Common myeloid progenitor, CD34-positive (primary cell): ENCODE measurements at regions of chr3 and their contacts with region 1.

Region 1: DNA sequence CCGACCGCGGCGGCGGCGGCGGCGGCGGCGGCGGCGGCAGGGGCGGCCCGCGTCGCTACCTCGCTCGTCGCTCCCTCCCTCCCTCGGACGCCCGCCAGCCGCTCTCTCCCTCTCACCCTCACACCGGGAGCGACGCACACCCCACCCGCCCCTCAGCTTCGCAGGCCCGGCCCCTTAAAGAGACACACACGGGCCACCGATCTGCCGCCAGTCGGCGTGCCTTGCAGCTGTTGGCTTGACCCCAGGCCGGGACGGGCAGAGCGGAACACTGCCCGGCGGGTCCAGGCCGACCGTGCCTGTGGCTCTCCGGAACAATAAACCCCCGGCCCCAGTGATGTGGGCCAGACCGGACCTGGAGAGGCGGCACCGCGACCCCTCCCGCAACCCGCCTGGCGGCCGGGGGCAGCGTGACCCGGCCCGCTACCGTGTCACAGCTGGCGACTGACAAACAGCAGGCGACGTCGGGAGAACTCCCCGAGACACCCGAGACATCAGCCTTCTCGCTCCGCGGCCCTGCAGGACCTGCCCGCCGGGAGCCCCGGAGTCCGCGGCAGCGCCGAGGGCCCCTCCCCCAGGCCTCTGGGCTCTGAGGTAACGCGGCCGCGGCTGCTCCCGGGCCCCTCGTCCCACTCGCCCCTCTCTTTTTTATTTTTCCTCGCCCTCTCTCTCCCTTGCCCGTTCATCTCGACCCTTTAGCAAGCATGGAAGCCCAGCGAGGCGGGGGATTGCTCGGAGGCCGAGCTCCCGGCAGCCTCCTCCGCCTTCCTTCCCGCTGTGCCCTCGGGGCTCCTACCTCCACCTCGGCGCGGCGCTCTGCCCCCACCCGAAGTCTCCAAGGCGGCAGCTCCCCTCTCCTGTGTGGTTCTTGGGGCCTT is at the start of gene SETD2:
- DNase-seq: peak; percentile 89 to 95 (median 91)
- H3K4me3 ChIP-seq: peak within 1 kb of the TSS; percentile 89 to 99 (median 94)
- H3K27ac ChIP-seq: peak within 1 kb of the TSS; percentile 92 to 95
- H3K4me1 ChIP-seq: peaks cover 15 to 46% (median 40%) of the 10 kb centered on the region in 4 experiments
- H3K27me3 ChIP-seq: no peaks in the 10 kb centered on the region

Region 2: DNA sequence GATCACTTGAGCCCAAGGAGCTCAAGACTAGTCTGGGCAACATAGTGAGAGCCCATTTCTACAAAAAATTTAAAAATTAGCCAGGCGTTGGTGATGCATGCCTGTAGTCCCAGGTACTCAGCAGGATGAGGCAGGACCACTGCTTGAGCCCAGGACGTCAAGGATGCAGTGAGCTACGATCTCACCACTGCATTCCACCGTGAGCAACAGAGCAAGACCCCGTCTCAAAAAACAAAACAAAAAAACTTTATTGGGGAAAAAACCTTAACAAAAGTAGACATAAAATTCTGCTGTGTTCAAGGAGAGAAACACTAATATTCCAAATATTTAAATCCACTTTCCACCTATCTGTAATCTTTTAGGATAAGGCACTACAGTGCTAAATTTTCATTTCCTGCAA is 21.2 kb before region 1 on chr3:
- CTCF ChIA-PET with region 1: interaction called, 4 read pairs
- POLR2A ChIA-PET with region 1: interaction called, 11 read pairs
- DNase-seq: no peak
- H3K4me3 ChIP-seq: no peak overlapping the region
- H3K27ac ChIP-seq: no peak overlapping the region
- H3K4me1 ChIP-seq: peaks cover 0 to 12% (median 4%) of the 10 kb centered on the region in 4 experiments
- H3K27me3 ChIP-seq: no peaks in the 10 kb centered on the region

Region 3: GRCh38 chr3:47152578-47152977 is 11.7 kb before region 1 on chr3:
- CTCF ChIA-PET with region 1: interaction called, 11 read pairs
- POLR2A ChIA-PET with region 1: no interaction called
- DNase-seq: peak in 2 of 3 donors; percentile 32 to 48
- H3K4me3 ChIP-seq: peak overlapping the region in 1 of 7 experiments; percentile 36
- H3K27ac ChIP-seq: peak overlapping the region in 1 of 2 experiments; percentile 47
- H3K4me1 ChIP-seq: peaks cover 0 to 26% (median 17%) of the 10 kb centered on the region in 4 experiments
- H3K27me3 ChIP-seq: no peaks in the 10 kb centered on the region